Caco-2 (cell line): ENCODE measurements at regions of chr10 and their contacts with region 1.

Region 1: DNA sequence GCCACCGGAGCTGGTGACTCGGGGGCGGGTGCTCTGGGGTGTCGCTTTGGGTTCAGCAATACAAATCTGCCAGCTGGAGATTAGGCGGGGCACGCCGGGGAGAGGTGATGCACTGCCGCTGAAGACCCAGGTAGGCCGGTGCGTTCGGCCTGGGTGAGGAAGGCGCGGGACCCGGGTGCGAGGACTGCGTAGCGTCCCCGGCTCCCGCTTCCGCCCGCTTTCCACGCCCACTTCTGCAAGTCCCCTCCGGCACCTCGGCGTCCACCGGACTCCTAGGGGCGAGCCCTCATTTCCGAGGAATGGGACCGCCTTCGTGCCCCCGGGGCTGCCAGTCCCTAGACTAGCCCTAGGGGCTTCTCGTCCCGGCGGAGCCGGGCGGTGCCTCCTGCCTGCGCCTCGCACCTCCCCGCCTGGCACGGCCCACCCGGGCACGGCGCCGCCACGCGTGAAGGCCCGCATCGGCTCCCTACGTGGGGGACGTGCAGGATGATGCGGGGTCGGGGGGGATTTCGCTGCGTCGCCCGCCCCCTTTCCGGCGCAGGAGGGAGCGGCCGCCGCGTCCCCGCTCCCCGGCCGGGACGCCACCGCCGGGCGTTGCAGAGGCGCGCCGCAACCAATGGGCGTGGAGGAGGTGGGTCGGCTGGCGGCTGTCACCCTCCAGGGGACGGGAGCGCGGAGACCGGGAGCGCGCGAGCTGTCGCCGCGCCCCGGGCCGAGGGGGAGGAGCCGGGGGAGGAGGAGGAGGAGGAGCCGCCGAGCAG is 40.0 kb downstream of the HK1 start:
- DNase-seq: peak; percentile 92 to 98
- H3K4me3 ChIP-seq: peak overlapping the region; percentile 64
- H3K4me3 Mint-ChIP-seq: peak overlapping the region; percentile 87
- H3K27ac Mint-ChIP-seq: peak overlapping the region; percentile 53
- H3K4me1 ChIP-seq: peaks cover 48% of the 10 kb centered on the region
- H3K4me1 Mint-ChIP-seq: peaks cover 25% of the 10 kb centered on the region
- H3K27me3 ChIP-seq: no peaks in the 10 kb centered on the region
- H3K27me3 Mint-ChIP-seq: no peaks in the 10 kb centered on the region
- CTCF ChIP-seq: no peak

Region 2: DNA sequence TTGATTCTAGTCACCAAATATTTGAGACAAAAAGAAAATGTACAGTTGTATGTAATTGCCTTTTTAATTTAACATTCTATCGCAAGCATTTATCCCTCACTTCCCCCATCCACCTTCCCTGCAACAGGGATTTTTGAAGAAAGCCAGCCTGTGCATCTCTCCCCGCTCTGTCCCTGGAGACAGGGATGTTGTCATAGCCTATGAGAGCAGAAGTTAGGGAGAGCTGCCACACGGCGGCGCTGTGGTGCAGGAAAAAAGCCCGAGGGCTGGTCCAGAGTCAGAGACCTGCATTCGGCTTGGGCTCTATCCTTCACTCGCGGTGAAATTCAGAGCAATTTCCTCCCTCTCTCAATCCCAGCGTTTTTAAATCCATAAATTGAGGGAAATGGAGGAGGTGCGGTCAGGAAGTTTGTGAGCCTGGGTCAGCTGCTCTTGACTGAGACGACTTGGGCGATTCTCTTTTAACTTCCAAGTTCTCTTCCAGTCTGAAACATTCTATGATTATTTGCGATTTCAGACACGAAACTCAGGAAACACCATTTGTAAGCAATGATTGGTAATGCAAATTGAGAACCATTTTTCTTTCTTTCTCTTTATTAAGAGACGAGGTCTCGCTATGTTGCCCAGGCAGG is 80.6 kb before region 1 on chr10:
- CTCF ChIA-PET with region 1: no interaction called
- POLR2A ChIA-PET with region 1: no interaction called
- intact Hi-C with region 1: loop called (anchors 1 kb)
- DNase-seq: peak; percentile 86 to 95
- H3K4me3 ChIP-seq: no peak overlapping the region
- H3K4me3 Mint-ChIP-seq: no peak overlapping the region
- H3K27ac Mint-ChIP-seq: no peak overlapping the region
- H3K4me1 ChIP-seq: peaks cover 5% of the 10 kb centered on the region
- H3K4me1 Mint-ChIP-seq: peaks cover under 1% of the 10 kb centered on the region
- H3K27me3 ChIP-seq: no peaks in the 10 kb centered on the region
- H3K27me3 Mint-ChIP-seq: no peaks in the 10 kb centered on the region
- CTCF ChIP-seq: peak; percentile 99 to 100

Region 3: GRCh38 chr10:69333205-69333604 is 14.9 kb after region 1 on chr10:
- CTCF ChIA-PET with region 1: interaction called, 6 read pairs
- POLR2A ChIA-PET with region 1: interaction called, 4 read pairs
- intact Hi-C with region 1: loop called (anchors 1 kb)
- DNase-seq: peak; percentile 93 to 95
- H3K4me3 ChIP-seq: no peak overlapping the region
- H3K4me3 Mint-ChIP-seq: peak overlapping the region; percentile 52
- H3K27ac Mint-ChIP-seq: peak overlapping the region; percentile 86
- H3K4me1 ChIP-seq: peaks cover 70% of the 10 kb centered on the region
- H3K4me1 Mint-ChIP-seq: peaks cover 55% of the 10 kb centered on the region
- H3K27me3 ChIP-seq: no peaks in the 10 kb centered on the region
- H3K27me3 Mint-ChIP-seq: no peaks in the 10 kb centered on the region
- CTCF ChIP-seq: peak; percentile 69 to 85

Region 4: GRCh38 chr10:69360485-69361324 is 42.4 kb after region 1 on chr10:
- CTCF ChIA-PET with region 1: interaction called, 3 read pairs
- POLR2A ChIA-PET with region 1: interaction called, 4 read pairs
- intact Hi-C with region 1: loop called (anchors 1 kb)
- DNase-seq: peak; percentile 75
- H3K4me3 ChIP-seq: no peak overlapping the region
- H3K4me3 Mint-ChIP-seq: no peak overlapping the region
- H3K27ac Mint-ChIP-seq: peak overlapping the region; percentile 37
- H3K4me1 ChIP-seq: peaks cover 13% of the 10 kb centered on the region
- H3K4me1 Mint-ChIP-seq: peaks cover 24% of the 10 kb centered on the region
- H3K27me3 ChIP-seq: no peaks in the 10 kb centered on the region
- H3K27me3 Mint-ChIP-seq: no peaks in the 10 kb centered on the region
- CTCF ChIP-seq: no peak

Region 5: DNA sequence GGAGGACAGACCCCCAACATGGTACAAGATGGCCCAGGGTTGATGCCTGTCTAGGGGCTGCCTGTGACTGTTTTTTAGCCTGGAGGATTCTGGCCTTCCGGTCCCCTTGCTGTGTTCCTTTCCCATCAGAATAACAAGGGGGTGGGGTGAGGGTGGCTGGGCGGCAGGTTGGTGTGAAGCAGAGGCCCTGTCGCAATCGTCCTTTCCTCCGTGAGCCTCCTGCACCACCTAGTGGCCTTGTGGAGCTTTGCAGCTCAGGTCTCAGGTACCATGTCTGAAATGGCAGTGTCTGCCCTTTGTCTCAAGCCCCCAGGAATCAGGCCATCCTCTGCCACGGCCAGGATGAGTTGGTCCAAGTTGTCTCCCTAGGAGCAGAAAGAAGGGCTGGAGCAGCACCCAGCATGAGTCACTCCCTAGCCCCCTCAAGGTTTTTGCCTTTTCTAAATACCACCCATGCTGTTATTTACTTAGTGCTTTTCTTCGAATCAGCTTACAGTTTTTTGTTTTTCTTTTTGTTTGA is 74.3 kb after region 1 on chr10:
- CTCF ChIA-PET with region 1: interaction called, 6 read pairs
- POLR2A ChIA-PET with region 1: no interaction called
- intact Hi-C with region 1: loop called (anchors 2 kb)
- DNase-seq: peak; percentile 91 to 94
- H3K4me3 ChIP-seq: no peak overlapping the region
- H3K4me3 Mint-ChIP-seq: no peak overlapping the region
- H3K27ac Mint-ChIP-seq: no peak overlapping the region
- H3K4me1 ChIP-seq: peaks cover 4% of the 10 kb centered on the region
- H3K4me1 Mint-ChIP-seq: no peaks in the 10 kb centered on the region
- H3K27me3 ChIP-seq: no peaks in the 10 kb centered on the region
- H3K27me3 Mint-ChIP-seq: no peaks in the 10 kb centered on the region
- CTCF ChIP-seq: peak; percentile 99 to 100

Region 6: DNA sequence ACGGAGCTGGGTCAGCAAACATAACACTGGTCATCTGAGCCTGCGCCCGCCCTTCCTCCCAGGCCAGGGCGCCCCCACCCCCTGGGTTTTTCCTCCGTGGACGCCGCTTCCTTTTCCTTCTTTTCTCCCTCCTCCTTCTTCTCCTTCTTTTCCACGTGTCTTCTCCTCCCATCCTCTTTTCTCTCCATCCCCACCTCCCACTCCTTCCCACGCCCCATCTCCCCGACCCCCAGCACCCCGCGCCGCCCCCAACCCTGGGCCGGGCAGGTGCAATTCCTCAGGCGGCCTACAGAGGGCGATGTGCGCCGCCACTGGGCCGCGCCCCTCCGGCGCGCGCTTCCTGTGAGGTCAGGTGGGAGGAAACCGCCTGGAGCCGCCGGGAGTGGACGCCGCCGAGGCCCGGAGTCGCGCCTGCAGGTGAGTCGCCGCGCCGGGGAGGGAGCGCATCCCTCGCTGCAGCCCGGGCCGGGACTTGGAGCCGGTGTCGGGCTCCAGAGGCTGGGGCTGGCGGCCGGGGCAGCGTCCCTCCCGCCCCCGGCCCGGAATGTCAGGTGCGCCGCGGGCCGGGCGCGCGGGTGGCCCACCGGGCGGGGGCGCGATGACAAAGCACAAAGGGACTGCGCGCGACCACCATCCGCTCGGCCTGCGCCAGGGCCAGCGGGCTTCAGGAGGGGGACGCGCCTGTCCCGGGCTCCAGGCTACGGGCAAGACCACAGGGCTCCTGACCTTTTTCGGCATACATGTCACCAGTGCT is 311.8 kb after region 1 on chr10 and contains the start of gene FAM241B:
- CTCF ChIA-PET with region 1: no interaction called
- POLR2A ChIA-PET with region 1: no interaction called
- intact Hi-C with region 1: loop called (anchors 2 kb)
- DNase-seq: peak; percentile 90 to 95
- H3K4me3 ChIP-seq: peak within 1 kb of the TSS; percentile 57
- H3K4me3 Mint-ChIP-seq: peak within 1 kb of the TSS; percentile 68
- H3K27ac Mint-ChIP-seq: no peak within 1 kb of the TSS
- H3K4me1 ChIP-seq: peaks cover 6% of the 10 kb centered on the region
- H3K4me1 Mint-ChIP-seq: no peaks in the 10 kb centered on the region
- H3K27me3 ChIP-seq: no peaks in the 10 kb centered on the region
- H3K27me3 Mint-ChIP-seq: no peaks in the 10 kb centered on the region
- CTCF ChIP-seq: peak; percentile 99 to 100
- total RNA-seq, gene FAM241B: 24.9 and 30.2 TPM in 2 replicates